ENCODE measurements at regions of chr19 and their contacts with region 1.

Region 1: DNA sequence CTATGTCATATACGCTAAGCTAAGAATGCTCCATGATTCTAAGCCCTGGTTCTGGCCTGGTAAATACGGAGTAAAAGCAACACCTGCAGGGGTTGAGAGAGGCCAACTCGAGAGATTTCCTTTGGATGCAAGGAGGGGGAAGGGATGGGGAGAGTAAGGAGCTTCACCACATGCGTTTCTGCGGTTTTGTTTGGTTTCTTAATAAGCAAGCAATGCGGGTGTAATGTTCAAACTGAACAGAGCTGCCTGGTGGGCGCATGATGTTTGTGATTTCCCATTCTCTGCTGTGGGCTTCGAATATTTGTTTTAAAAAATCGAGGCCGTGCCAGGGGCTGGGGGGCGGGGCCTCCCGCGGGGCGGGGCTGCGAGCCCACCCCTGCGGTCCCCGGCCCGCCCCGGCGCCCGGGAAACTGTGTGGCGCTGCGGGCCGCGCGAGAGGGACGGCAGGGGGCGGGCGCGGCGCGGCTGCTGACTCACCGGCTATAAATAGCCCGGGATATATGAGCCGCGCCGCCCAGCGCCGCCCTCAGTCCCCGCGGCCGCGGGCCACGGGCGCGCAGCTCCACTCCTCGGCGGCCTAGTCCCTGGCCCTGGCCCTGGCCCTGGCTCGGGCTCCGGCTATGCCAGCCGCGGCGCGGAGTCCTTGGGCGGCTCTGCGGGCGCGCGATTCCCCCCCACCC is 5.1 kb downstream of the BBC3 start:
- DNase-seq: no peak
- H3K4me3 ChIP-seq: peak overlapping the region; percentile 95
- CTCF ChIP-seq: peak; percentile 32

Region 2: DNA sequence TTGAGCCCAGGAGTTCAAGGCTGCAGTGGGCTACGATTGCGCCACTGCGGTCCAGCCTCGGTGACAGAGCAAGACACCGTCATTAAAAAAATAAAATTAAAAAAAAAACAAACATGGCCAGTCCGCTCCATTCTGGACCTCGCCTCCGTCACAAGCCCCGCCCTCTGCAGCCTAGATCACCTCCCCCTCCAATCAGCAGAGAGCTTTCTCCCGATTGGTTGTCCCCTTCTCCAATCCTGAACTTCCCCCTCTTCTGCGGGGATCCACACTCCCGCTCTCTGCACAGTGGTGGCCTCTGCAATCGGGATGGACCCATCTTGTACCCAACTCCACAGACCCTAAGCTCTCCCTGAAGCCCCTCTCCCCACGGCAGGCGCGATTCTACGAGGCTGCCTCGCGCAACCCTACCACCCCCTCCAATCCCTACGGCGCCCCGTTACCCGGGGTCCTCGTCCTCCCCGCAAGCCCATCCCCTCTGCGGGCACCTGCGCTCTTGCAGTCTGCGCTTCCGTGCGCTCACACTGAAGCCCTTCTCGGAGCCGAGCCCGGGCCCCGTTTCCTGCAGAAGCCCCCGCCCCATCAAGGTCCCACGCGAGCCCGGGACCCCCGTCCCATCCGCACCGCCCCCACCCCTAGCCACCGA is 178.0 kb before region 1 on chr19:
- CTCF ChIA-PET with region 1: no interaction called
- POLR2A ChIA-PET with region 1: no interaction called
- DNase-seq: peak; percentile 57
- H3K4me3 ChIP-seq: peak overlapping the region; percentile 75
- CTCF ChIP-seq: no peak

Region 3: GRCh38 chr19:47152224-47153017 is 73.5 kb before region 1 on chr19:
- CTCF ChIA-PET with region 1: interaction called, 10 read pairs
- POLR2A ChIA-PET with region 1: interaction called, 3 read pairs
- DNase-seq: no peak
- H3K4me3 ChIP-seq: no peak overlapping the region
- CTCF ChIP-seq: no peak

Region 4: GRCh38 chr19:47256688-47257443 is 31.0 kb after region 1 on chr19:
- CTCF ChIA-PET with region 1: interaction called, 3 read pairs
- POLR2A ChIA-PET with region 1: interaction called, 28 read pairs
- DNase-seq: peak; percentile 92
- H3K4me3 ChIP-seq: peak overlapping the region; percentile 71
- CTCF ChIP-seq: no peak

Measured in AG04449 (cell line).